Activated B cell treated with CpG ODN at 0.5 μM for 24 hours (primary cell): ENCODE measurements at regions of chr17 and their contacts with region 1.

Region 1: DNA sequence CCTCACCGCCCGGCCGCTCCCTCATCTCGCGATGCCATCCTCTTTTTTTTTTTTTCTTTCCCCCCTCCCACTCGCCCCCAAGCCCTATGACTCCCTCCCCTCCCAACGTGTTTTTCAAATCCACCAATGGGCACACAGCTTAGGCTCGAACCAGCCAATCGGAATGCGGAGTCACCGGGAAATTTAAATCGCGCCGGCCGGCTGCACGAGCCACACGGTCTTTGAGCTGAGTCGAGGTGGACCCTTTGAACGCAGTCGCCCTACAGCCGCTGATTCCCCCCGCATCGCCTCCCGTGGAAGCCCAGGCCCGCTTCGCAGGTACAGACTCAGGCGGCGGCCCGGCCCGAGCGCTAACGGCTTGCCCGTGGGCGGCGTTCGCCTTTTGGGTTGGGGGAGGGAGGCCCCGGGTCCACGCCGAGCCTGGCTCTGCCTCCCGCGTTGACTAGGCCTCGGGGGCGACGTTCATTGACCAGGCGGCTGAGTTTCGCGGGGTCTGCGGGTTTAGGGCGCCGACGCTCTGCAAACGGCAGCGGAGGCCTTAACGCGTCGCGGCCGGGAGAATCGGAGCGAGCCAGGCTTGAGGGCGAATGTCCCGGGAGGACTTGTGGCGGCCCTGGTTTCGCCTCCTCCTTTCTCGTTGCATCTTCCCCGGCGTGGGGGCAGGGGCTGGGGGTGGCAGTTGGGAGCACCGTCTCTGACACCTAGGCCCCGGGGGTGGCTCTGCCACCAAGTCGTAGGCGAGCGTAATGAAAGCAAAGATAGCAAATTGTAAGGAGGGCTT is at the start of gene KPNA2:
- DNase-seq: peak; percentile 80
- ATAC-seq: peak; percentile 89
- H3K4me3 Mint-ChIP-seq: peak within 1 kb of the TSS; percentile 93
- H3K27ac Mint-ChIP-seq: peak within 1 kb of the TSS; percentile 92
- H3K4me1 Mint-ChIP-seq: peaks cover 11% of the 10 kb centered on the region
- H3K27me3 Mint-ChIP-seq: no peaks in the 10 kb centered on the region
- CTCF ChIP-seq: no peak
- total RNA-seq, gene KPNA2: 49.5 and 49.9 TPM in 2 replicates

Region 2: DNA sequence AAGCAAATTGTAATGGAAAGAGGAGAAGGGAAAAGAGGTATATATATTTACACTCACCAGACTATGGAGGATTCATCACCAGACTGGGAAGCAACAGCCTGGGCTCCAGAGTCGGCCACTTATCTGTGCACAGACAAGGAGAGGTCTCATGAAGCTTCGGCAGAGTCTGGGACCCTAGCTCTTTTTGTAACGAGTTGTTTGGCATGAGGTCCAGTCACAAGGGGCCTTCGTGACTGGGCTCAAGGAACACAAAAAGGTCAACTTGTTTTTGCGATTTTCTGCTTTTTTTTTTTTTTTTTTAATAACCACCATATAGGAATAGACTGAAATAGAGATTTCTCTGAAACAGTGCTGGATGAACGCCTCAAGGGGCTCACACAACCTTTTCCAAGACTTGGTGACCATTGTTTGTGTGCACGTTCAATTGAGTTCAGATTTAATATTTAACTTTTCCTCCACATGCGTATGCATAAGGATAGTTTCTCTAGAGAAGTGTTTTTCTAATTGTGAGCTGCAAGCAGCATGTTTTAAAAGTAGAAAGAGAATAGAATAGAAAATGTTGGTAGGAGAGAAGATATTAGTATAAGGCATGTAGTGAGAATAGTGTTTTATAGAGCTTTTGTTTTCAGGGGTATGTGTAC is 184.6 kb before region 1 on chr17:
- CTCF ChIA-PET with region 1: no interaction called
- POLR2A ChIA-PET with region 1: no interaction called
- intact Hi-C with region 1: no loop called
- DNase-seq: no peak
- ATAC-seq: no peak
- H3K4me3 Mint-ChIP-seq: no peak overlapping the region
- H3K27ac Mint-ChIP-seq: peak overlapping the region; percentile 12
- H3K4me1 Mint-ChIP-seq: peaks cover 49% of the 10 kb centered on the region
- H3K27me3 Mint-ChIP-seq: no peaks in the 10 kb centered on the region
- CTCF ChIP-seq: no peak

Region 3: GRCh38 chr17:67959288-67959900 is 76.3 kb before region 1 on chr17:
- CTCF ChIA-PET with region 1: no interaction called
- POLR2A ChIA-PET with region 1: no interaction called
- intact Hi-C with region 1: loop called (anchors 5 kb)
- DNase-seq: no peak
- ATAC-seq: no peak
- H3K4me3 Mint-ChIP-seq: no peak overlapping the region
- H3K27ac Mint-ChIP-seq: no peak overlapping the region
- H3K4me1 Mint-ChIP-seq: peaks cover 3% of the 10 kb centered on the region
- H3K27me3 Mint-ChIP-seq: no peaks in the 10 kb centered on the region
- CTCF ChIP-seq: no peak

Region 4: GRCh38 chr17:68019675-68020408 is 15.9 kb before region 1 on chr17:
- CTCF ChIA-PET with region 1: interaction called, 5 read pairs
- POLR2A ChIA-PET with region 1: interaction called, 19 read pairs
- intact Hi-C with region 1: loop called (anchors 1 kb)
- DNase-seq: peak; percentile 99
- ATAC-seq: peak; percentile 90
- H3K4me3 Mint-ChIP-seq: peak overlapping the region; percentile 90
- H3K27ac Mint-ChIP-seq: peak overlapping the region; percentile 90
- H3K4me1 Mint-ChIP-seq: peaks cover 14% of the 10 kb centered on the region
- H3K27me3 Mint-ChIP-seq: peaks cover 2% of the 10 kb centered on the region
- CTCF ChIP-seq: no peak

Region 5: GRCh38 chr17:68054296-68054900 is 18.7 kb after region 1 on chr17:
- CTCF ChIA-PET with region 1: no interaction called
- POLR2A ChIA-PET with region 1: no interaction called
- intact Hi-C with region 1: no loop called
- DNase-seq: no peak
- ATAC-seq: no peak
- H3K4me3 Mint-ChIP-seq: no peak overlapping the region
- H3K27ac Mint-ChIP-seq: no peak overlapping the region
- H3K4me1 Mint-ChIP-seq: no peaks in the 10 kb centered on the region
- H3K27me3 Mint-ChIP-seq: no peaks in the 10 kb centered on the region
- CTCF ChIP-seq: no peak

Region 6: DNA sequence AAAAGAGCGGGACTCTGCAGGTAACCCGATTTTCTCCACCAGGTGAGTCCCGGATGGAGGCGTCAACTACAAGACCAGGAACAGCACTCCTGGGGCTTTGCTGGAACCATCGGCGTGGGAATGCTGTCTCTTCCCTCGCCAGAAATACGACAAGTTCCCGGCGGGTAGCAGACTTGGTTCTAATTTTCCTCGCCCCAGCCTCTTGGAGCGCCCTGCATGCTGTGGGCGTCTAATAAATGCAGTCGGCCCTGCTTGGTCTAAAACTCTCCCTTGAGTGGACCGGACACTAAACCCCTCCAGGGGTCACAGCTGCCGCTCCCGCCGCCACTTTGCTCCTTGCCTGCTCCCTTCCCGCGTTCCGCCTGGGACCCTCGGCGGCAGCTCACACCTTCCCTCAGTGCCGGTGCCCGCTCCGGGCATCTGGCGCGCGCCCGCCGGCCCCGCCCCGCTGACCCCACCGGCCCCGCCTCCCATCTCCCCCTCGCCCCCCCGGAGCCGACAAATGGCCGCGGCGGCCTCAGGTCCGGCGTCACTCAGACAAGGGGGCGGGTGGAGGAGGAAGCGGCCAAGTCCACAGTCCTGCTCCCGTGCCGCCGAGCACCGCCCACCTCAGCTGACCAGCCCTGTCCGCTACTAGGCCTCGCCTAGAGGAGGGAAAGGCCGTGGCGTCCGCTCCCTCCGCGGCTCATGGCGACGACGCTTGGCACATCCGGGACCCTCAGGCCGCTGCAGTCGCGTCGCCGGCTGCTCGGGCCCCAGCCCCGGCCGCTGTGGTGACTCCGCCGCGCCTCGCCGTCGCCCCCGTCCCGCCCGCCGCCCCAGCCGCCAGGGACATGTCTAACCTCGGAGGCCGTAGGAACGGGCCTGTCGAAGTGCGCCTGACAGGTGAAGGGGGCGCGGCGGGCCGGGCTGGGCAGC is 65.6 kb after region 1 on chr17:
- CTCF ChIA-PET with region 1: no interaction called
- POLR2A ChIA-PET with region 1: interaction called, 3 read pairs
- intact Hi-C with region 1: loop called (anchors 5 kb)
- DNase-seq: peak; percentile 75
- ATAC-seq: peak; percentile 86
- H3K4me3 Mint-ChIP-seq: peak overlapping the region; percentile 93
- H3K27ac Mint-ChIP-seq: peak overlapping the region; percentile 85
- H3K4me1 Mint-ChIP-seq: peaks cover 31% of the 10 kb centered on the region
- H3K27me3 Mint-ChIP-seq: no peaks in the 10 kb centered on the region
- CTCF ChIP-seq: no peak

Region 7: GRCh38 chr17:68238164-68238872 is 202.6 kb after region 1 on chr17:
- CTCF ChIA-PET with region 1: no interaction called
- POLR2A ChIA-PET with region 1: no interaction called
- intact Hi-C with region 1: loop called (anchors 2 kb)
- DNase-seq: no peak
- ATAC-seq: no peak
- H3K4me3 Mint-ChIP-seq: peak overlapping the region; percentile 79
- H3K27ac Mint-ChIP-seq: peak overlapping the region; percentile 99
- H3K4me1 Mint-ChIP-seq: peaks cover 72% of the 10 kb centered on the region
- H3K27me3 Mint-ChIP-seq: no peaks in the 10 kb centered on the region
- CTCF ChIP-seq: no peak